Heart left ventricle (tissue), 16 donors: ENCODE measurements at regions of chr11 and their contacts with region 1.

Region 1: DNA sequence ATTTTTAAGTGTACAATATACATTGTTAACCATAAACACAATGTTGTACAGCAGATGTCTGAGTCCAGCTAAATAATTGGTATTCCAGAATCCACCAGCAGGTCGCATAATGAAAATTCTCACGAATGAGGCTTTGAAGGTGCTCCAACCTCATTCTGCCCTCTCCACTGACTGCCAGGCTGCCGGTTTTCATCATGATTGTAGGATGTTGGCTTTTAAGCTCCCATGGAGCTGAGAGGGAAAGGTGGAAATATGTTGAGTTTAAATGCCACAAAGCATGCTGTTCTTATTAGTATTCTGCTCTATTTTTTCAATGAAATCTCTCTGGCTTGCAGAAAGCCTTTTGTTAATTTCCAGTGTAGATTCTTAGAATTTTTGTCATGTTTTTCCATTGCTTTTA is 337.2 kb upstream of the DDI1 start:
- DNase-seq: no peak
- ATAC-seq: no peak
- H3K4me3 ChIP-seq: no peak overlapping the region
- H3K27ac ChIP-seq: no peak overlapping the region
- H3K4me1 ChIP-seq: peaks cover 0 to 8% (median 3%) of the 10 kb centered on the region in 12 donors
- H3K27me3 ChIP-seq: no peaks in the 10 kb centered on the region
- CTCF ChIP-seq: peak in 1 of 12 donors; percentile 5
- POLR2A ChIP-seq: no peak

Region 2: GRCh38 chr11:103648670-103649402 is 50.4 kb before region 1 on chr11:
- intact Hi-C with region 1: no loop called
- DNase-seq: no peak
- ATAC-seq: no peak
- H3K4me3 ChIP-seq: no peak overlapping the region
- H3K27ac ChIP-seq: no peak overlapping the region
- H3K4me1 ChIP-seq: no peaks in the 10 kb centered on the region
- H3K27me3 ChIP-seq: no peaks in the 10 kb centered on the region
- CTCF ChIP-seq: no peak
- POLR2A ChIP-seq: no peak

Region 3: GRCh38 chr11:103798026-103798425 is 98.8 kb after region 1 on chr11:
- intact Hi-C with region 1: loop called in 1 of 10 experiments (anchors 10 kb)
- DNase-seq: peak in 2 of 5 donors; percentile 27 to 37
- ATAC-seq: peak; percentile 49 to 72 (median 64)
- H3K4me3 ChIP-seq: no peak overlapping the region
- H3K27ac ChIP-seq: peak overlapping the region in 8 of 12 donors; percentile 15 to 76 (median 66)
- H3K4me1 ChIP-seq: peaks cover 0 to 54% (median 12%) of the 10 kb centered on the region in 12 donors
- H3K27me3 ChIP-seq: no peaks in the 10 kb centered on the region
- CTCF ChIP-seq: no peak
- POLR2A ChIP-seq: no peak

Region 4: DNA sequence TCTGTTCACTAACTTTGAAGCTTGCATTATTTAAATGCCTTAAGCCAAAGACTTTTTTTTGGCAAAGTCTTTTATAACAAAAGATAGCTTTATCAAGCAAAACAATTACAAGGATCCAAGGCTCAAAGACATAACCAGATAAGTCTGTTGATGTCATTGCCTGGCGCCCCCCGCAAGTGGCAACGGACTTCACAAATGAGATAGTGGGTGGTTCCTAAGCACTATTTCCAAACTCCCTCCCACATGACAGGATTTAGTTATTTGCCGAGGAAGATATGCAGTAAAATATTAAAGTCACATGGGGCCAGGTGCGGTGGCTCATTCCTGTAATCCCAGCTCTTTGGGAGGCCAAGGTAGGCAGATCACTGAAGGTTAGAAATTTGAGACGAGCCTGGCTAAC is 143.0 kb after region 1 on chr11:
- intact Hi-C with region 1: no loop called
- DNase-seq: no peak
- ATAC-seq: peak in 1 of 4 donors; percentile 46
- H3K4me3 ChIP-seq: no peak overlapping the region
- H3K27ac ChIP-seq: no peak overlapping the region
- H3K4me1 ChIP-seq: peaks cover 0 to 16% (median 0%) of the 10 kb centered on the region in 12 donors
- H3K27me3 ChIP-seq: no peaks in the 10 kb centered on the region
- CTCF ChIP-seq: no peak
- POLR2A ChIP-seq: no peak